A549 (cell line): ENCODE measurements at regions of chr2 and their contacts with region 1.

Region 1: DNA sequence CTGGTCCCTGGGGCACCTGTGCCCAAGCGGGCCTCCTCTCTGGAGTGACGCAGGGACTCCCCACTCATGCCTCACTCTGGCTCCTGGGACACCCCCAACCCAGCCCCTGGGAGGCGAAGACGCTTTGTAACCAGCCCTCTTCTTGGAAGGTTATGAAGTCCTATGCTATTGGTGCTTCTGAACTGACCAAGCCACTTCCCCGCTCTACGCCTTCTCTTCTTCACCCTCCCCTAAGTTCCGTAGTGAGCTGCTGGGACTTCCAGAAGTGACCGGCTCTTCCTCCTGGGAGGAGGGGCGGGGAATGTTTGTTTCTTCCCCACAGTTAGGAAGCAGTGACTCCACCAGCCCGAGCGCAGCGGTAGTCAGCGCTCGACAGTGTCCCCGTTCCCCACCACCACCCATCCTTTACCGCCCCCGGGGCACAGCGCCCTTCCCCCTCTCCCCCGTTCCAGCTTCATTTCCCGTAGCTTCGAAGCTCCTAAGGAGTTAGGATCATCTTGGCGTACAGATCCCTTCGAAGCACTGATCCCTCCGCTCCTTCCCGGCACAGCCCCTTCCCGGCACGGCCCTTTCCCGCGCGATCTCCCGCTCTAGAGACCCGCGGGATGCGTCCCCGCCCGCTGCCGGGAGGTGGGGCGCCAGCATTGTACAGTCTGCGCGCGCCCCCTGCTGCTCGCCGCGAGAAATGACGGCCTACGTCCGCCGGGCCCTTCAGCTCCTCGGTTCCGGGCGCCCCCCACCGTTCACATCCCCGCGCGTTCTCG is 25.3 kb upstream of the NOTO start:
- DNase-seq: peak; percentile 87 to 95
- ATAC-seq: peak; percentile 86 to 96
- H3K4me3 ChIP-seq: peak overlapping the region; percentile 50
- H3K27ac ChIP-seq: peak overlapping the region; percentile 67 to 86
- H3K4me1 ChIP-seq: peaks cover 11% of the 10 kb centered on the region
- CTCF ChIP-seq: peak; percentile 99
- EP300 ChIP-seq: no peak
- POLR2A ChIP-seq: 0 out of 2 replicates have a peak, but pooled peaks have one; percentile 18
- RAD21 ChIP-seq: peak; percentile 90 to 98

Region 2: DNA sequence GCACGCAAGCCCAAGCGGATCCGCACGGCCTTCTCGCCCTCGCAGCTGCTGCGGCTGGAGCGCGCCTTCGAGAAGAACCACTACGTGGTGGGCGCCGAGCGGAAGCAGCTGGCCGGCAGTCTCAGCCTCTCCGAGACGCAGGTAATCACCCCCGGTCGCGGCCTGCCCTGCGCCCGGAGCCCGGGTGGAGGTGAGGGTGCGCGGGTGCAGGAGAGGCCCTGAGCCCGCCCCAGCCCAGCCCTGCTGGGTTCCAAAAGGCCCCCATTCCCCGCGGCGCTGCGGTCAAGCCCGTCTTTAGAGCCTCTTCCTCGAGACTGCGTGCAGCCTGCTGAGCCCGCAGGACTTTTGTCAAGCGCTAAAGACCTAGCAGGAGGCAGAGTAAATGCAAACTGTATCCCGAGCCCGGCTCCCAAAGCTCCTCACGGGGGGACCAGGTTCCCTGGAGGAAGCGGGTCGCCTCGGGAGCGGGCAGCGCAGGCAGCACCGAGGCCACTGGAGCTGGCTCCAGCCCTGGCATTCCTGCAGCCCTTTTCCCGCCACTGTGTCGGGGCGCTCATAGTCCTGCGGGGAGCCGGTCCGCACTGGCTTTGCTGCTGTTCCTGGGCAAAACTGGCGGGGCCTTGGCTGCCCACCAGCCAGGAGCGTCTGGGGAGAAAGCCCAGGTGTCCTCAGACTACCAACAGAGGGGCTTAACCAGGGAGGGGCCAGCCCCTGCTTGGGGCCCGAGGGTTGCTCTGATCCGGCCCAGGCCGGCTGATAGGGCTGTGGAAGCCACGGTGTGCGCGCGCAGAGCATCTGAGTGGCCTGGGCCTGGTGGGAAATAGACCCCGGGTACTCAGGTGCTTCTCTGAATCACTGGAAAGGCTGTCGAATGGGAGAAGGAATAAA is 252.5 kb before region 1 on chr2:
- CTCF ChIA-PET with region 1: interaction called, 12 read pairs
- POLR2A ChIA-PET with region 1: no interaction called
- DNase-seq: no peak
- ATAC-seq: peak; percentile 6 to 36; a peak in 3 of 6 replicates
- H3K4me3 ChIP-seq: no peak overlapping the region
- H3K27ac ChIP-seq: no peak overlapping the region
- H3K4me1 ChIP-seq: peaks cover 5% of the 10 kb centered on the region; the same call in 1 of the 3 replicates
- CTCF ChIP-seq: no peak
- EP300 ChIP-seq: no peak
- POLR2A ChIP-seq: no peak
- RAD21 ChIP-seq: no peak

Region 3: GRCh38 chr2:72973566-72974435 is 203.3 kb before region 1 on chr2:
- CTCF ChIA-PET with region 1: interaction called, 21 read pairs
- POLR2A ChIA-PET with region 1: no interaction called
- DNase-seq: peak; percentile 67 to 89
- ATAC-seq: peak; percentile 91 to 97
- H3K4me3 ChIP-seq: no peak overlapping the region
- H3K27ac ChIP-seq: no peak overlapping the region
- H3K4me1 ChIP-seq: no peaks in the 10 kb centered on the region
- CTCF ChIP-seq: peak; percentile 85
- EP300 ChIP-seq: no peak
- POLR2A ChIP-seq: no peak
- RAD21 ChIP-seq: peak; percentile 66 to 67

Region 4: DNA sequence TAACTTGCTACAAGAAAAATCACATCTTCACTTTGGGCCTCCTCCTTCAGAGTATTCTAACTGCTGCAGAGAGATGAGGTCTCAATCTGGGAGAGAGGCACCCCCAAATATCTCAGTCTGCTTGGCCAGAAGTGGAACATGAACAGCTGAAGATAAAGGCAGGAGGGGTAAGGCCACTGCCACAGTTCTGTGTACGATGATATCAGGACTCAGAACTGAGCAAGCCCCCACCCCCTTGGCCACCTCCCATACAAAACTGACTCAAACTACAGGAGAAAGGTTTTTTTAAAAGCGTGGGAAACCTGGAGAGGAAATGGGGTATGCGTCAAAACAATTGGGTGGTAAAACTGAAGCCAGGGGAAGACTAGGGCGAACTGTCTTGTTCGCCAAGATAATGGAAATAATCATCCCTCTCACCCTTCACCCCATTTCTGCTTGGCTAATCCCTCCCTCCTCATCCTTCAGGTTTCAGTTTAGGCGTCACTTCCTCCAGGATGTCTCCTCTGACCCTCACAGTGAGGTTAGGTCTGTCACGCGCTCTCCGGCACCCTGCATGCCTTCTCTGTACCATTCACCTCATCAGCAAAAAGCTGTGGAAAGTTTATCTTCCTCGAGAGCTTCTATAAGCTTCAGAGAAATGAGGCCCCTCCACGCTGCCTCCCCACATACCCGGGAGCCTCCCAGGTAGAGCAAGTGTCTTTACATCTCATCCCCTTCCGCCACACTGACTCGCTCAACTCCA is 169.9 kb before region 1 on chr2:
- CTCF ChIA-PET with region 1: interaction called, 13 read pairs
- POLR2A ChIA-PET with region 1: no interaction called
- DNase-seq: no peak
- ATAC-seq: no peak
- H3K4me3 ChIP-seq: no peak overlapping the region
- H3K27ac ChIP-seq: no peak overlapping the region
- H3K4me1 ChIP-seq: no peaks in the 10 kb centered on the region
- CTCF ChIP-seq: no peak
- EP300 ChIP-seq: no peak
- POLR2A ChIP-seq: no peak
- RAD21 ChIP-seq: no peak

Region 5: DNA sequence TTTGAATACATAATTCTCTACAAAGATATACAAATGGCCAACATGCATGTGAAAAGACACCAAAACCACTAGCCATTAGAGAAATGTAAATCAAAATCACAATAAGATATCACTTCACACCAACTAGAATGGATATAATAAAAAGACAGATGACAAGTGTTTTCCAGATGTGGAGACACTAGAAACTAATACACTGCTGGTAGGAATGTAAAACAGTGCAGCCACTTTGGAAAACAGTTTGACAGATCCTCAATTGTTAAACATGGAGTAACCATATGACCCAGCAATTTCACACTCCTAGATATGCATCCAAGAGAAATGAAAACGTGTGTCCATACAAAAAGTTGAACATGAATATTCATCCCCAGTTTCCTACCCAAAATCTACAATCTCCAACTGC is 54.5 kb before region 1 on chr2:
- CTCF ChIA-PET with region 1: no interaction called
- POLR2A ChIA-PET with region 1: no interaction called
- DNase-seq: no peak
- ATAC-seq: no peak
- H3K4me3 ChIP-seq: no peak overlapping the region
- H3K27ac ChIP-seq: no peak overlapping the region
- H3K4me1 ChIP-seq: no peaks in the 10 kb centered on the region
- CTCF ChIP-seq: no peak
- EP300 ChIP-seq: no peak
- POLR2A ChIP-seq: no peak
- RAD21 ChIP-seq: no peak

Region 6: DNA sequence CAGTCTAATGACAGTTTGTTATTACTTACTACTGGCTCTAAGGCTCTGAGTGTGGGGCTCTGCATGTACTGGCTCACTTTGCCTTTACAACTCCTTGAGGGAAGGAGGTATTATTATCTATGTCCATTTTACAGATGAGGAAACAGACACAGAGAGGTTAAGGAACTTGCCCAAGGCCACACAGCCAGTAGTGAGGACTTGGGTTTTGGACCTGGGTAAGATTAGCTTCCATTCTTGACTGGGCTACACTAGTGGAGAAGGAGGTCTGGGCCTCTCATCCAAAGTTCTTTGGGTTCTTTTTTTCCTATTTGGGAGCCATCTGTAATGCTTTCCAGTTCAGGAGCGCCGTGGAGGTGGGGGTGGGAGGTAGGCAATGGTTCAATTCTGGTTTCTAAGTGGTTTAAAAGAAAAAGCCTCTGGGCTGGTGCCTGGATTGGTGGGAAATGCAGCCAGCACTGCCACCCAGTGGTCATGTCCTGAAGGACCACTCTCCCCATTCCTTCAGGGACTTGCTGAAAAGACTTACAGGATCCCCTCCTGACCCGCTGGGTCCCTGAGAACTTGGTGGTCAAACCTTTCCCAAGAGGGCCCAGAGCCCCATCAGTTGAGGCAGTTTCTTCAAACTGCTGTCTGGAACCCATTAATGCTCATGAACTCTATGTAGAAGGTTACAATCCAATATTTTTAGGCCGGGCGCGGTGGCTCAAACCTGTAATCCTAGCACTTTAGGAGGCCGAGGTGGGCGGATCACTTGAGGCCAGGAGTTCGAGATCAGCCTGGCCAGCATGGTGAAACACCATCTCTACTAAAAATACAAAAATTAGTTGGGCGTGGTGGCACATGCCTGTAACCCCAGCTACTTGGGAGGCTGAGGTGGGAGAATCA is 13.3 kb before region 1 on chr2:
- CTCF ChIA-PET with region 1: interaction called, 60 read pairs
- POLR2A ChIA-PET with region 1: no interaction called
- DNase-seq: peak; percentile 82 to 88
- ATAC-seq: peak; percentile 94 to 99
- H3K4me3 ChIP-seq: no peak overlapping the region
- H3K27ac ChIP-seq: no peak overlapping the region
- H3K4me1 ChIP-seq: no peaks in the 10 kb centered on the region
- CTCF ChIP-seq: peak; percentile 96
- EP300 ChIP-seq: no peak
- POLR2A ChIP-seq: no peak
- RAD21 ChIP-seq: peak; percentile 95 to 96

Region 7: DNA sequence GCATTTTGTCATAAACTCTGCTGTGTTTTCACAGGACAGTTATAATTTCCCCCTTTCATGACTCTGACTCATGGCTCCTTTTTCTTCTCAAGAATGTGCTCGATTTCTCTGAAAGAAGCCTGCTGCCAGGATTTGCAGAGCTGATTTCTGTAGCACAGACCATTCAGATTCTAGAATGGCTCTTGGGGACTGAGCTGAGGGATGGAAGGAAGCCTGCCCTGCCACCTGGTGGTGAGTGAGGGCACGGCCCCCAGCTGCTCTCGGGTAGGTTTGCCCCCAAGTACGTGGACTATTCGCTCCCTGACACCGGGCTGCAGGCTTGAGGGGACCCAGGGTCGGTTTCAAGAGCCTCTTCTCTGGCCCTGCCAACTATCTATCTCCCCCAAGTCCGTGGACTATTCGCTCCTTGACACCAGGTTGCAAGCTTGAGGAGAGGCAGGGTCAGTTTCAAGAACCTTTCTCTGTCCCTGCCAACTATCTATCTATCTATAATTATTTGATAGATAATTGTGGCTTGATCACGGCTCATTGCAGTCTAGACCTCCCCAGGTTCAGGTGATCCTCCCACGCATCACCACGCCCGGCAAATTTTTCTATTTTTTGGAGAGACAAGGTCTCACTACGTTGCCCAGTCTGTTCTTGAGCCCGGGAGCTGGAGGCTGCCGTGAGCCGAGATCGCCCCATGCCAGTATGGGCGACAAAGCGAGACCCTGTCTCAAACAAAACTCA is 35.5 kb after region 1 on chr2:
- CTCF ChIA-PET with region 1: interaction called, 173 read pairs
- POLR2A ChIA-PET with region 1: interaction called, 5 read pairs
- DNase-seq: peak; percentile 81 to 92
- ATAC-seq: peak; percentile 76 to 89
- H3K4me3 ChIP-seq: no peak overlapping the region
- H3K27ac ChIP-seq: no peak overlapping the region
- H3K4me1 ChIP-seq: peaks cover 16% of the 10 kb centered on the region
- CTCF ChIP-seq: peak; percentile 92
- EP300 ChIP-seq: no peak
- POLR2A ChIP-seq: no peak
- RAD21 ChIP-seq: peak; percentile 72 to 73

Region 8: DNA sequence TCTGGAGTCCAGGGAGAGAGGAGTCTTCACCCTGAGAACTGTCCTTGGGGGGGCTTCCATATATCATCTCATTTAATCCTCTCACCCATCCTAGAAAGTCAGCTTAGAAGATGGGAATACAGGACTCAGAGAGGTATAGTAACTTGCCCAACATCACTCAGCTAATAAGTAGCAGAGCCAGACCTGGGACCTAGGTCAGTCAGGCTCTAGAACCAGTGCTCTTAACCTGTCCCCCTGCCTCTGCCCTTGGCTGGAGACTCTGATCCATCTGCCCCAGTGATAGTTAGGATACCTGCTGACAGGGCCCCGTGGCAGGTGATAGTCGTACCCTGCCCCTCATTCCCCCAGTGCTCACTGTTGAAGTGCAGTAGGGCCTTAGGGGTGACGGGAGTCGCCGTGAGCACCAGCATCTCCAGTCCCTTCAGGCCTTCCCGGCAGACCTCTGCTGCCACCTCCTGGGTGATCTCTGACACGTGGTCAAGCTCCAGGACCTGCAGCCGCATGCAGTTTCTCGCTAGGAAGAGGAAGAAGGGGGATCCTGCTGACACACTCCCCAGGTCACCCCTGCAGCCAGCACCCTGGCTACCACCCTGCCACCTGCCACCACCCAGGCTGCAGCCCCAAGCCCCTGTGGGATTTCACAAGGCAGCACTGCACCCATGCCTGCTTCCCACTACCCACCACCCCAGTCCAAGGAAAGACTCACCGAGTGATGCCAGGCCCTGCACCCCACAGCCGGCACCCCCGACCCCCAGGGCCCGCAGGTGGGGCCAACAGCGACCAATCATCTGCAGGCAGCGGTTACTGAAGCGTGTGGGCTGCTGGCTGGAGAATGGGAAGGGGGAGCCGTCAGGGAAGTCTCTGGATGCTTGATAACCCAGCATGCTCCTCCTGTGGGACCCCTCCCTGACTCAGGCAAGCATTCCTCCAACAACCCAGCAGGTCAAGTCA is 83.2 kb after region 1 on chr2:
- CTCF ChIA-PET with region 1: interaction called, 12 read pairs
- POLR2A ChIA-PET with region 1: no interaction called
- DNase-seq: peak; percentile 76 to 84
- ATAC-seq: peak; percentile 69 to 84
- H3K4me3 ChIP-seq: no peak overlapping the region
- H3K27ac ChIP-seq: no peak overlapping the region
- H3K4me1 ChIP-seq: no peaks in the 10 kb centered on the region
- CTCF ChIP-seq: peak; percentile 61
- EP300 ChIP-seq: no peak
- POLR2A ChIP-seq: no peak
- RAD21 ChIP-seq: peak; percentile 61 to 68

Region 9: GRCh38 chr2:73536133-73536840 is 359.2 kb after region 1 on chr2:
- CTCF ChIA-PET with region 1: no interaction called
- POLR2A ChIA-PET with region 1: no interaction called
- DNase-seq: no peak
- ATAC-seq: no peak
- H3K4me3 ChIP-seq: no peak overlapping the region
- H3K27ac ChIP-seq: no peak overlapping the region
- H3K4me1 ChIP-seq: no peaks in the 10 kb centered on the region
- CTCF ChIP-seq: no peak
- EP300 ChIP-seq: no peak
- POLR2A ChIP-seq: no peak
- RAD21 ChIP-seq: no peak